ENCODE measurements at regions of chr18 and their contacts with region 1.

Region 1: DNA sequence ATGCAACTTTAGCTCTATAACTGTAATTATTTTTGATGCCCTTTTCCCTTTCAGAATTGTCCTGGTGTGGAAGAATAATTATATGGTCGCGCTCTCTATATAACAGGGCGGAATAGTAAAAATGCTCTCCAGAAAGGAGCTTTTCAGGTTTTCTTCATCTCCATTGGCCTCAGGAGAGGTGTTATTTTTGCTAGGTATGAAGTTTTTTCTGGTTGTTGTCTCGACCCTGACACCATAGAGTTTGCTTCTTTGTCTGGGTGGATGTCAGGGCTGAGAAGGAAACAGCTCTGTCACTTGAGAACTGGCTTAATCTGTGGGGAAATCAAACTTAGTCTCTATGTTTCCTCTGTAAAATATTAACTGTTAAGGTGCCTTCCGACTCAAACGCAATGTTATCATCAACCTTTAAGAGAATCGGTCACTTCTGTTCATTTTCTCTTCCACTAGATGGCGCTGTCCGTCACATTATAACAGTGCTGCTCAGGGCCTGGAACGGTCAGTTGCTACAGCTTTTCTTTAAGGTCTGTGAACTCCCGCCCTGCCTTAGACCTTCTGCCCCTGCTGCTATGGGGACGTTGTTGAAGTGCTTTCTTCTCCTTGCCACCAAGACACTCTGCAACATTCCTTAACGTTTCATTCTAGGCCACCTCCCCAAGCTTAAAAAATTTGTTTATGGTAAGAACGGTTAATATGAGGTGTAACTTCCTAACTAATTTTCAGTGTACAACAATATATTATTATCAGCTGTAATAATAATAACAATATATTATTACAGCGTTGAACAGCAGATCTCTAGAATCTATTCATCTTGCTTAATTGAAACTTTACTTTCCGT is 23.8 kb upstream of the SERPINB12 start:
- DNase-seq: peak; percentile 79
- H3K4me3 Mint-ChIP-seq: no peak overlapping the region
- H3K27ac Mint-ChIP-seq: no peak overlapping the region
- H3K4me1 Mint-ChIP-seq: no peaks in the 10 kb centered on the region
- H3K27me3 Mint-ChIP-seq: peaks cover 8% of the 10 kb centered on the region

Region 2: DNA sequence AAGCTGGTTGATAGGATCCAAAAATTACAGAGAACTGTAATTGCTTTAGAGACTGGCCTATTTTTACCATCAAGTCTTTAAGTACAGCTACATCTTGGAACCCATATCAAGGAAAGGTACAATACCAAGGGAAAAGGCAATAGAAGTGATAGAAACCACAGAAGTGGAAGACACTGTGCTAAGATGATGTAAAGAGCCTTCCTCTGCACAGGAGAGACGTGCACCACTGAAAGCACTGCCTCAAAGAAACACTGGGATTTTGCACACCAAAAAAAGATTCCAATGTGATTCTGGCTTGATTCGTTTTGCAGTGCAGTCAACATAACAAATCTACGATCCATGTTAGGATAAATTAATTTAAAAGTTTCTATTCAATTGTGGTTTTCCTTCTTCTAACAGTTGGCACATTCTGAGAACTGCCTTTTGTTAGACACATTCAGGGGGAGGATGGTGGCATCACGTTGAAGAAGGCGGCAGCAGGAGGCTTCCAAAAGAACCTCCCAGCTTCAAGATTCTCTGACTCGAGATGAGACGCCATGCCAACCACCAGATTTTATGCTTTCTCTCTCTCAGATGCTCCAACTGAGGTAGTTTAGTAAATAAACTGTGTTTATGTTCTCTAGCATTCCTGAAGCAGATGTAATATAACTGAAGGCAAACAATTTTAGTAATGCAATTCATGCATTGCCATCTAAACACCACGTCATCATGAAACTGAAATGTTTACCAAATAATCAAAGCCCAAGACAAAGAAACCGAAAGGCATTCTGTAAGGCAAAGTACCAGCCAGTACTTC is 301.7 kb before region 1 on chr18:
- CTCF ChIA-PET with region 1: no interaction called
- intact Hi-C with region 1: no loop called
- DNase-seq: peak; percentile 48
- H3K4me3 Mint-ChIP-seq: peak overlapping the region; percentile 64
- H3K27ac Mint-ChIP-seq: peak overlapping the region; percentile 94
- H3K4me1 Mint-ChIP-seq: peaks cover 89% of the 10 kb centered on the region
- H3K27me3 Mint-ChIP-seq: no peaks in the 10 kb centered on the region

Region 3: DNA sequence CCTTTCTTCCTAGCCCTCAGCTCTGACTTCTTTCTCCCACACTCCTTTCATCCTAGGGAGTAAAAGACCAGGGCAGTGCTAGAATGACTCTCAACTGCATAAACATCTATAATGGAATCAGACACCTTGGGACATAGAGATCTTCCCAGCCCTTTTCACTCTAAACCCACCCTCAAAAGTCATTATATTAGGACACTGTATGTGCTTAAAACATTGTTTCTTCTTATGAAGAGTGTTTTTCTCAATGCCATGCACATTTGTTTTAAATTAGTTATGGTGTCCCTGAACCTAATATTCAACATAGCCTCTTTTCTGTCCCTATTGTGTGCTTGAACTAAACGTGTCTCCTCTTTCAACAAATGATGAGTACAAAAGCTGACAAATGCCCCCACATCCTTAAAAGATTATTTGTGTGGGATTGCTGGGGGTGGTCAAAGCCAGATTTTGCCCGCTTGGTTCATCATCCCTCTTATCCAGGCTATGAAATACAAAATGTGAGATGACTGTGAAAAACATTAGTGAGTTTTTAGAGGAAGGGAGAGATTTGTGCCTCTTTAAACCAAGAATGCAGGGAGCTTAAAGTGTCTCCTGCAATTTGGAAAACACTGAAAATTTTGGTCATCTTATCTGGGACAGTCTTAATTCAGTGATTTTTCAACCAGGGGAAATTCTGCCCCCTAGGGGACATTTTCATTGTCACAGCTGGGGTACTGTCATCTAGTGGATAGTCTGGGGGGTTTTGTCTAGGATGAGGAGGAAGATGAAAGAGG is 12.6 kb before region 1 on chr18:
- CTCF ChIA-PET with region 1: interaction called, 42 read pairs
- intact Hi-C with region 1: no loop called
- DNase-seq: peak; percentile 64
- H3K4me3 Mint-ChIP-seq: no peak overlapping the region
- H3K27ac Mint-ChIP-seq: no peak overlapping the region
- H3K4me1 Mint-ChIP-seq: no peaks in the 10 kb centered on the region
- H3K27me3 Mint-ChIP-seq: peaks cover 28% of the 10 kb centered on the region

Region 4: GRCh38 chr18:63578357-63578958 is 60.1 kb after region 1 on chr18:
- CTCF ChIA-PET with region 1: interaction called, 78 read pairs
- intact Hi-C with region 1: loop called (anchors 1 kb)
- DNase-seq: peak; percentile 28
- H3K4me3 Mint-ChIP-seq: no peak overlapping the region
- H3K27ac Mint-ChIP-seq: no peak overlapping the region
- H3K4me1 Mint-ChIP-seq: no peaks in the 10 kb centered on the region
- H3K27me3 Mint-ChIP-seq: peaks cover 10% of the 10 kb centered on the region

Region 5: GRCh38 chr18:63848159-63848558 is 329.8 kb after region 1 on chr18:
- CTCF ChIA-PET with region 1: interaction called, 46 read pairs
- intact Hi-C with region 1: loop called (anchors 1 kb)
- DNase-seq: no peak
- H3K4me3 Mint-ChIP-seq: no peak overlapping the region
- H3K27ac Mint-ChIP-seq: no peak overlapping the region
- H3K4me1 Mint-ChIP-seq: no peaks in the 10 kb centered on the region
- H3K27me3 Mint-ChIP-seq: peaks cover 14% of the 10 kb centered on the region

Region 6: GRCh38 chr18:63979409-63979920 is 461.1 kb after region 1 on chr18:
- CTCF ChIA-PET with region 1: interaction called, 9 read pairs
- intact Hi-C with region 1: loop called (anchors 1 kb)
- DNase-seq: peak; percentile 58
- H3K4me3 Mint-ChIP-seq: no peak overlapping the region
- H3K27ac Mint-ChIP-seq: no peak overlapping the region
- H3K4me1 Mint-ChIP-seq: peaks cover 16% of the 10 kb centered on the region
- H3K27me3 Mint-ChIP-seq: no peaks in the 10 kb centered on the region